ENCODE measurements at regions of chr22 and their contacts with region 1.

Region 1: GRCh38 chr22:46737976-46738646 is at the start of gene CERK:
- DNase-seq: peak; percentile 61
- ATAC-seq: peak; percentile 51
- H3K4me3 Mint-ChIP-seq: peak within 1 kb of the TSS; percentile 89
- H3K27ac Mint-ChIP-seq: peak within 1 kb of the TSS; percentile 82
- H3K4me1 Mint-ChIP-seq: peaks cover 42% of the 10 kb centered on the region
- H3K27me3 Mint-ChIP-seq: no peaks in the 10 kb centered on the region
- CTCF ChIP-seq: no peak
- total RNA-seq, gene CERK: 13.8 and 16.9 TPM in 2 replicates

Region 2: GRCh38 chr22:46367707-46368191 is 370.4 kb before region 1 on chr22:
- CTCF ChIA-PET with region 1: no interaction called
- POLR2A ChIA-PET with region 1: interaction called, 4 read pairs
- intact Hi-C with region 1: loop called (anchors 10 kb)
- DNase-seq: peak; percentile 72
- ATAC-seq: peak; percentile 65
- H3K4me3 Mint-ChIP-seq: no peak overlapping the region
- H3K27ac Mint-ChIP-seq: no peak overlapping the region
- H3K4me1 Mint-ChIP-seq: peaks cover 12% of the 10 kb centered on the region
- H3K27me3 Mint-ChIP-seq: no peaks in the 10 kb centered on the region
- CTCF ChIP-seq: peak; percentile 58

Region 3: GRCh38 chr22:46684706-46685105 is 53.4 kb before region 1 on chr22:
- CTCF ChIA-PET with region 1: interaction called, 4 read pairs
- POLR2A ChIA-PET with region 1: no interaction called
- intact Hi-C with region 1: loop called (anchors 1 kb)
- DNase-seq: peak; percentile 51
- ATAC-seq: peak; percentile 92
- H3K4me3 Mint-ChIP-seq: peak overlapping the region; percentile 61
- H3K27ac Mint-ChIP-seq: peak overlapping the region; percentile 65
- H3K4me1 Mint-ChIP-seq: peaks cover 35% of the 10 kb centered on the region
- H3K27me3 Mint-ChIP-seq: no peaks in the 10 kb centered on the region
- CTCF ChIP-seq: no peak

Region 4: DNA sequence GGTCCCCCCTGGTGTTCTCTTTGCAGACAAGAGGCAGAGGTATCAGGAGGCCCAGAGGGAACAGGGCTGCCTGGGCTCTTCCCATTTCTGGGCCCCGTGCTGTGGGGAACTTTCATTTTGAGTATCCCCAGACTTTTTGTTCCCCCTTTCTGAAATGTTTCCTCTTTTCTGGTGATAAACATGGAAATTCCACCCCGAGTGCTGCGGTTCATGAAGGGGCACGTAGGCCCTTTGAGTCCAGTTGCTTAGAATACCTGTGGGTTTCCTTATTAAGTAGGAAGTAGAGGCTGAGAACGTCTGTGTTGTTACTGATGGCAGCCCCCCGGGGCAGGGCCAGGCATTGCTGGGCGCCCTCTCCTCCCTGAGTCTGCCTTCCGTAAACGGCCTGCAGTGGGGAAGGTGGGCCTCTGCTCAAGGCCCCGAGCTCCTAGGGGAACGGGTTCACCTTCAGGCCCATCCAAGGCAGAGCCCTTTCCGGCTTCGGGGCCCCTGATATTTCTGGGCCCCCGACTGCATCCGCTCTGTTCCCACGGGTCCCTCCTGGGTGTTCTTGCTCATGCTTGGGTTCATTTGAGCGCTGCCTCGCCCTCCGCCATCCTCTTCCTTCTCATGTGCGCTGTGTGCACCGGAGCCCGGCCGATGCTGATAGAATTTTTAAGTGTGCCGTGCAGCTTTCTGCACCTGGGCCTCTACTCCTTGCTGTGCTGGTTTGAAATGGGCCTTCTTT is 36.3 kb after region 1 on chr22:
- CTCF ChIA-PET with region 1: no interaction called
- POLR2A ChIA-PET with region 1: interaction called, 9 read pairs
- intact Hi-C with region 1: loop called (anchors 1 kb)
- DNase-seq: peak; percentile 66
- ATAC-seq: peak; percentile 64
- H3K4me3 Mint-ChIP-seq: peak overlapping the region; percentile 72
- H3K27ac Mint-ChIP-seq: peak overlapping the region; percentile 89
- H3K4me1 Mint-ChIP-seq: peaks cover 93% of the 10 kb centered on the region
- H3K27me3 Mint-ChIP-seq: no peaks in the 10 kb centered on the region
- CTCF ChIP-seq: no peak

Region 5: DNA sequence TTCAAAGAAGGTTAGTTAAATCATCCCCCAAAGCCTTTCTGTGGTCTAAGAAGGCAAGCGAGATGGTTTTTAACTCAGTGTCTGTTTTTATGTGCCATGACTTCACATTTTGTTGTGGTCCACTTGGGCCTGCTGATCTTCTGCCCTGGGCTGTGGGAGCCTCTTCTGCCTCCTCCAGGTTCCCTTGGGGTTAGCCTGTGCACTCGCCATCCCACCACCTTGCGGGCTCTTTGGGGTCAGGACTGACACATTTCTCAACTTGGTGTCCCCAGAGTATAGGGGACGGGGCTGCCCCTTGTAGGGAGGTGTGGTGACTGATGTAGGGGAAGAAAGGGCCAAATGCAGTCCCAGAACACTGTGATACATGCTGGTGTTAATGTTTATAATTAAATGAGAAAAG is 231.4 kb after region 1 on chr22:
- CTCF ChIA-PET with region 1: no interaction called
- POLR2A ChIA-PET with region 1: no interaction called
- intact Hi-C with region 1: loop called (anchors 5 kb)
- DNase-seq: peak; percentile 34
- ATAC-seq: peak; percentile 93
- H3K4me3 Mint-ChIP-seq: no peak overlapping the region
- H3K27ac Mint-ChIP-seq: peak overlapping the region; percentile 39
- H3K4me1 Mint-ChIP-seq: peaks cover 33% of the 10 kb centered on the region
- H3K27me3 Mint-ChIP-seq: no peaks in the 10 kb centered on the region
- CTCF ChIP-seq: no peak

Measured in activated B cell treated with CpG ODN at 0.5 μM for 24 hours (primary cell).